Colonic mucosa (tissue), 4 donors: ENCODE measurements at regions of chr20 and their contacts with region 1.

Region 1: DNA sequence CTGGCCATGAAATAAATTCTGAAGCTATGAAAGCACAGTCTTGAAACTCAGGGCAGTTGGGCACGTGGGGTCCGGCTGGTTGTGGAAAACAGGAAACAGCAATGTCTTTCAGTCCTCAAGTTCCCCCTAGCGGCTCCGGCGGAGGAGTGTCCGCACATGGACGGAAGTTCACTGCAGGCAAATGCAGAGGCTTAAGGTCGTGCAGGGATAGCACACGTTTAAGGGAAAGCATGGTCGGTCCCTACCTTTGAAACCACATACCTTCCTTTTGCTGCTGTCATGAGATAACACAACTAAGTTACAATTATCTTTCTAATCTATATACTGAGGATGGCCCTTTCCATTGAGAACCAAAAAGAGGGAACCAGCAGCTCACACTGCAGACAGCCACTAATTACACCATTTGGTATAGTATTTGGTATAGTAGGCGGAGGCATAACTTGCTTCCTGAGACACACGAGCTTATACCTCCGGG is 52.6 kb upstream of the NFATC2 start:
- DNase-seq: peak; percentile 86
- H3K4me3 ChIP-seq: no peak overlapping the region
- H3K27ac ChIP-seq: no peak overlapping the region
- H3K4me1 ChIP-seq: no peaks in the 10 kb centered on the region
- H3K27me3 ChIP-seq: no peaks in the 10 kb centered on the region
- CTCF ChIP-seq: peak; percentile 83

Region 2: GRCh38 chr20:50987592-50988210 is 607.4 kb before region 1 on chr20:
- intact Hi-C with region 1: loop called (anchors 10 kb)
- DNase-seq: peak; percentile 82
- H3K4me3 ChIP-seq: no peak overlapping the region
- H3K27ac ChIP-seq: no peak overlapping the region
- H3K4me1 ChIP-seq: no peaks in the 10 kb centered on the region
- H3K27me3 ChIP-seq: no peaks in the 10 kb centered on the region
- CTCF ChIP-seq: peak; percentile 86

Region 3: GRCh38 chr20:51372176-51372803 is 222.8 kb before region 1 on chr20:
- intact Hi-C with region 1: loop called (anchors 2 kb)
- DNase-seq: peak; percentile 49
- H3K4me3 ChIP-seq: no peak overlapping the region
- H3K27ac ChIP-seq: no peak overlapping the region
- H3K4me1 ChIP-seq: no peaks in the 10 kb centered on the region
- H3K27me3 ChIP-seq: no peaks in the 10 kb centered on the region
- CTCF ChIP-seq: peak; percentile 73